Heart left ventricle (tissue), 16 donors: ENCODE measurements at regions of chr3 and their contacts with region 1.

Region 1: GRCh38 chr3:13452490-13453335 is 27.4 kb upstream of the HDAC11 start:
- DNase-seq: peak in 2 of 5 donors; percentile 32 to 37
- ATAC-seq: peak in 3 of 4 donors; percentile 51 to 63 (median 63)
- H3K4me3 ChIP-seq: peak overlapping the region in 10 of 12 donors; percentile 7 to 67 (median 55)
- H3K27ac ChIP-seq: peak overlapping the region in 9 of 12 donors; percentile 67 to 84 (median 80)
- H3K4me1 ChIP-seq: peaks cover 0 to 15% (median 5%) of the 10 kb centered on the region in 12 donors
- H3K27me3 ChIP-seq: no peaks in the 10 kb centered on the region
- CTCF ChIP-seq: peak; percentile 43 to 74 (median 60)
- POLR2A ChIP-seq: no peak

Region 2: GRCh38 chr3:12868039-12869034 is 584.4 kb before region 1 on chr3:
- intact Hi-C with region 1: loop called in 3 of 10 experiments (anchors 10 kb)
- DNase-seq: peak; percentile 85 to 90 (median 86)
- ATAC-seq: peak; percentile 83 to 96 (median 94)
- H3K4me3 ChIP-seq: peak overlapping the region in 9 of 12 donors; percentile 1 to 47 (median 26)
- H3K27ac ChIP-seq: peak overlapping the region in 1 of 12 donors; percentile 25
- H3K4me1 ChIP-seq: peaks cover 0 to 13% (median 8%) of the 10 kb centered on the region in 12 donors
- H3K27me3 ChIP-seq: peaks cover 0 to 13% (median 0%) of the 10 kb centered on the region in 9 donors
- CTCF ChIP-seq: peak; percentile 80 to 98 (median 92)
- POLR2A ChIP-seq: no peak

Region 3: DNA sequence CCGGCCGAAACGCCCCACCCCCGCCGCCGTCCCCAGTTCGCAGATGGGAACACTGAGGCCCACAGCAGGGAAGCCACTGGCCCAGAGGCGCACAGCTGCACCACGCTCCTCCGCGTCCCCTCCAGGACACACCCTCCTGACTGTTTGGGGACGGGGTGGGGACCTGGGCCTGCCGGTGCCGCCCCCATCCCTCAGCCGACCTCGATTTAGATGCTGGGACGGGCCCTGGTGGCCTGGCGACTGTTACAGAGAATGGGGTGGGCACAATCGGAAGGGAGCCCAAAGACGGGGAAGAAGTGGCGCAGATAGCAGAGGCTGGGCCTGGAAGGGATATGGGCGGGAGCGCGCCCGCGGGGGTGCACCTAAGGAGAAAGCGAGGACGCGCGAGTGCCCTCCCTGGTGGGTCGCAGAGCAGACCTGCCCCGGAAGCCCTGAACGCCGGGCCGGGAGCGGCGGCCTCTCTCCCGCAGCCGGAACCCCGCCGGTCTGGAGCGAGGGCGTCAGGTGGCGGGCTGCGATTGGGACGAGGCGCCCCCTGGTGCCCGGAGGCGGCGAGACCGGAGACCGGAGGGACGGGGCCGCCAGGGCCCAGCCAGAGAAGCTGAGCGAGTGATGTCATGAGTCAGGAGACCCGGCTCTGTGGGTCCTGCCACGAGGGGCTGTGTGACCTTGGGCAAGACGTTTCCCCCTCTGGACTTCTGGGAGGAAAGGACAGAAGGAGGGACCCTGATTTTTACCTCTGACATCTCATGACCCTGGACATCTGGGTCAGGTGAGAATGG is 457.9 kb before region 1 on chr3:
- intact Hi-C with region 1: loop called in 1 of 10 experiments (anchors 10 kb)
- DNase-seq: peak; percentile 90 to 94 (median 92)
- ATAC-seq: peak; percentile 60 to 78 (median 76)
- H3K4me3 ChIP-seq: peak overlapping the region; percentile 48 to 94 (median 84)
- H3K27ac ChIP-seq: peak overlapping the region; percentile 68 to 96 (median 94)
- H3K4me1 ChIP-seq: peaks cover 0 to 71% (median 31%) of the 10 kb centered on the region in 12 donors
- H3K27me3 ChIP-seq: no peaks in the 10 kb centered on the region
- CTCF ChIP-seq: peak; percentile 87 to 98 (median 94)
- POLR2A ChIP-seq: peak in 1 of 2 donors; percentile 61

Region 4: DNA sequence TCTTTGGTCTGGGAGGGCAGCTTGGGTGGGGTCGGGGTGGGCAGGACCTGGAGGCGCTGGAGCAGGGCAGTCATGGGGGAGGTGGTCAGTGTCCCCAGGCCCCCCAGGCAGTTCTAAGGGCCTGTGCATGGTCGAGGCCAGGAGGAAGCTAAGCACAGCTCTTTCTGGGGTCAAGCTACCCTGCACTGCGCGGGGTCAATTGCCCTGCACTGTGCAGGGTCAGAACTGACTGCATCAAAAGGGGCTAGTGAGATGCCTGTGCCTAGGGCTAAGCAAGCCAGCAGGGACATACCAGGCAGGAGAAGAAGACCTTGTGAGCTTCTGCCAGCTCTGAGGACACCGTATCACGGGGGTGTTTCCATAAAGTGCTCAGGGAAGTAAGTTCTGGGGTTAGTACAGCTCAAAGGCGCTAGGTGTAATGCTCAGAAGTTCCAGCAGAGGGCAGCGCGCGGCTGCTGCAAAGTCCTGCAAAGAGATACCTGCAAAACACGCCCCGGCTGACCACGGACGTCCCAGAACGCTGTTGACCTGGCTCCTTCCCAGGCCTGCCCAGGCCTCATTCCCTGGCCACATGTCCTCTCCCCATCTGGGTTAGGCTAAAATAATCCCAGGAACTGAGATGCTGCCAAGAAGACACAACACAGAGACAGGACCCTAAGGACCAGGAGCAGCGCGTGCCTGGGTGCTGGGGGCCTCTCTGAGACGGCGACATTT is 360.7 kb before region 1 on chr3:
- intact Hi-C with region 1: loop called in 9 of 10 experiments (anchors 1 to 5 kb)
- DNase-seq: peak; percentile 84 to 90 (median 87)
- ATAC-seq: peak; percentile 79 to 83 (median 81)
- H3K4me3 ChIP-seq: peak overlapping the region in 6 of 12 donors; percentile 22 to 34 (median 24)
- H3K27ac ChIP-seq: peak overlapping the region in 8 of 12 donors; percentile 28 to 78 (median 60)
- H3K4me1 ChIP-seq: peaks cover 0 to 24% (median 10%) of the 10 kb centered on the region in 12 donors
- H3K27me3 ChIP-seq: no peaks in the 10 kb centered on the region
- CTCF ChIP-seq: peak; percentile 93 to 99 (median 97)
- POLR2A ChIP-seq: no peak

Region 5: GRCh38 chr3:13282986-13283876 is 169.5 kb before region 1 on chr3:
- intact Hi-C with region 1: loop called in 1 of 10 experiments (anchors 10 kb)
- DNase-seq: peak in 1 of 5 donors; percentile 41
- ATAC-seq: peak in 2 of 4 donors; percentile 27 to 50
- H3K4me3 ChIP-seq: peak overlapping the region in 11 of 12 donors; percentile 50 to 80 (median 66)
- H3K27ac ChIP-seq: peak overlapping the region in 6 of 12 donors; percentile 25 to 90 (median 82)
- H3K4me1 ChIP-seq: peaks cover 0 to 23% (median 9%) of the 10 kb centered on the region in 12 donors
- H3K27me3 ChIP-seq: peaks cover 6 to 50% (median 31%) of the 10 kb centered on the region in 9 donors
- CTCF ChIP-seq: peak in 11 of 12 donors; percentile 15 to 55 (median 35)
- POLR2A ChIP-seq: no peak

Region 6: DNA sequence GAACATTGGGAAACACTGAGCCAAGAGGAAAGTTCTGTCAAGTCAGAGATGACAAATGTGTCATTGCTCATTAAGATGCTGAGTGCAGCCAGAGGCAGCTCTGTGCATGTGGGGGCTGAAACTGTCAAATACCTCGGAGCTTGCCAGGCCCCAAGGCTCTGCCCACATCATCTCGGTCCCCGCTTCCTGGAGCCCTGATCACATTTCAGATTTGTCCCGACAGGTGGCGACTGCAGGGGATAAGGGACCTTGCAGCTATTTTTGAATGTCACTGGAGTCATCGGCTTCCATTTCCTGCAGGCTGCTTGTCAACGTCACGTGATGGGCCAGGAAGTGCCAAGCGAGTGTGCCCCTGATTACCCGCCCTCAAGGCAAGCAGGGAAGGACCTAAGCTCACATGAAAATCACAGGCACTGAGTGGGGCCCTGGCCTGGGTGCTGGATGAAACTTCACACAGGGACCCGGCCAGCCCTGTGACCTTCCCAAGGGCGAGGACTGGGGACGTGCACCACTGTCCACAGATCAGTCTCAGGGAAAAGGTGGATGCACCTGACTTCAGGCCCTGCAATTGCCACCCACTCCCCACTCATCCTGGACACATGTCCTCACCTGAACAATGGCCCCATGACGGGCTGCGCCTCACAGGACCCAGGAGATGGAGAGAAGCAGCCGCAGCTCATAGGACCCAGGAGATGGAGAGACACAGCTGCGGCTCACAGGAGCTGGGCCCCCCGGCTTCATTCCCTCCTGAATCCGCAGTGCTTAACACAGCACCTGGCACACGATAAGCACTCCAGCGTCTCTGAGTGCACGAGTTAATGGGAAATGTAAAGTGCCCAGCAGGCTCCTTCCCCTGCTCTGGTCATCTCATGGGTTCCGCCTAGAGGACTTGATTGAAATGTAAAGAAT is 106.0 kb before region 1 on chr3:
- intact Hi-C with region 1: loop called in 2 of 10 experiments (anchors 5 to 10 kb)
- DNase-seq: peak; percentile 29 to 72 (median 42)
- ATAC-seq: peak in 3 of 4 donors; percentile 47 to 58 (median 49)
- H3K4me3 ChIP-seq: no peak overlapping the region
- H3K27ac ChIP-seq: no peak overlapping the region
- H3K4me1 ChIP-seq: peaks cover 0 to 14% (median 5%) of the 10 kb centered on the region in 12 donors
- H3K27me3 ChIP-seq: no peaks in the 10 kb centered on the region
- CTCF ChIP-seq: peak in 5 of 12 donors; percentile 12 to 30 (median 19)
- POLR2A ChIP-seq: no peak

Region 7: GRCh38 chr3:13574798-13575451 is 122.2 kb after region 1 on chr3:
- intact Hi-C with region 1: no loop called
- DNase-seq: peak in 2 of 5 donors; percentile 50 to 51
- ATAC-seq: peak in 2 of 4 donors; percentile 38 to 72
- H3K4me3 ChIP-seq: no peak overlapping the region
- H3K27ac ChIP-seq: peak overlapping the region in 5 of 12 donors; percentile 8 to 49 (median 22)
- H3K4me1 ChIP-seq: peaks cover 0 to 30% (median 13%) of the 10 kb centered on the region in 12 donors
- H3K27me3 ChIP-seq: no peaks in the 10 kb centered on the region
- CTCF ChIP-seq: no peak
- POLR2A ChIP-seq: no peak

Region 8: DNA sequence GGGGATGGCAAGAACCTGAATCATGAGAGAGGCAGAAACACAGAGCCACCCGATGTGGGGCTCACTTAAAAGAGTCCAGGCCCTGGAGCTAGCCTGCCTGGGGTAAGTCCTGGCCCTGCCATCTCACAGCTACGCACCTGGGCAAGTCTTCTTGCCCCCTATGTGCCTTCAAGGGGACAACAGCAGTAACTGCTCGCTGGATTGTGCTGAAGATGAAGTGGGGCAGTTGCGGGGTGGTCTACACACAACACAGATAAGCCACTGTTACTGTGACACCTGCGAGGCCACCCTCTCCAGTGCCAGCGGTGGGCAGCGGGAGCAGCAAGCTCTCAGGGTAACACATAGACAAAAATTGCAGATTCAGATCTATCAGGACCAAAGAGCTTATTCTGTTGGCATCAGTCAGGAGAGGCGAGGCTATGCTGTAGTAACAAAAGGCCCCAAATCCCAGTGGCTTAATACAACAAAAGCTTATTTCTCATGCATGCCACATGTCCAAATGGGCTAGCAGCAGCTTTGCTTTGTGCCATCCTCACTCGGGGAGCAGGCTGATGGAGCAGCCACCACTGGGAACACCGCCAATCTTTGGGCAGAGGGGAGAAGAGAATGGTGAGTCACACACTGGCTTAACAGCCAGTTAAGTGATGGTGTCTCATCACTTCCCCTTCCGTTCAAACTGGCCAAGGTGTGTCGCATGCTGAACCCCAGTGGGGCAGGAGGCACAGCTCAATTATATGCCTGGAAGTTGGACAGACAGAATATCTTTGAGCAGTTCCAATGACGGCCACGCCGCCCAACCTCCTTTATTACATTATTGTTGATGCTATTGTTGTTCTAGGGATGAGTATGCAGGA is 348.9 kb after region 1 on chr3:
- intact Hi-C with region 1: no loop called
- DNase-seq: no peak
- ATAC-seq: no peak
- H3K4me3 ChIP-seq: no peak overlapping the region
- H3K27ac ChIP-seq: no peak overlapping the region
- H3K4me1 ChIP-seq: no peaks in the 10 kb centered on the region
- H3K27me3 ChIP-seq: peaks cover 0 to 17% (median 0%) of the 10 kb centered on the region in 9 donors
- CTCF ChIP-seq: no peak
- POLR2A ChIP-seq: no peak